Heart right ventricle (tissue), 16 donors: ENCODE measurements at regions of chr6 and their contacts with region 1.

Region 1: GRCh38 chr6:125013938-125014660 is 51.9 kb downstream of the RNF217 start:
- DNase-seq: no peak
- ATAC-seq: peak in 3 of 8 donors; percentile 25 to 51 (median 29)
- H3K4me3 ChIP-seq: no peak overlapping the region
- H3K27ac ChIP-seq: no peak overlapping the region
- H3K4me1 ChIP-seq: peaks cover 0 to 22% (median 11%) of the 10 kb centered on the region in 9 donors
- H3K27me3 ChIP-seq: no peaks in the 10 kb centered on the region
- CTCF ChIP-seq: no peak

Region 2: GRCh38 chr6:125099211-125100073 is 85.3 kb after region 1 on chr6:
- intact Hi-C with region 1: loop called in 1 of 10 experiments (anchors 5 kb)
- DNase-seq: peak; percentile 58 to 62
- ATAC-seq: peak; percentile 76 to 96 (median 92)
- H3K4me3 ChIP-seq: peak overlapping the region in 9 of 10 donors; percentile 33 to 73 (median 60)
- H3K27ac ChIP-seq: peak overlapping the region in 2 of 10 donors; percentile 25 to 63
- H3K4me1 ChIP-seq: peaks cover 0 to 29% (median 17%) of the 10 kb centered on the region in 9 donors
- H3K27me3 ChIP-seq: peaks cover 0 to 3% (median 0%) of the 10 kb centered on the region in 7 donors
- CTCF ChIP-seq: peak in 2 of 9 donors; percentile 18 to 22